IMR-90 (cell line): ENCODE measurements at regions of chr6 and their contacts with region 1.

Region 1: DNA sequence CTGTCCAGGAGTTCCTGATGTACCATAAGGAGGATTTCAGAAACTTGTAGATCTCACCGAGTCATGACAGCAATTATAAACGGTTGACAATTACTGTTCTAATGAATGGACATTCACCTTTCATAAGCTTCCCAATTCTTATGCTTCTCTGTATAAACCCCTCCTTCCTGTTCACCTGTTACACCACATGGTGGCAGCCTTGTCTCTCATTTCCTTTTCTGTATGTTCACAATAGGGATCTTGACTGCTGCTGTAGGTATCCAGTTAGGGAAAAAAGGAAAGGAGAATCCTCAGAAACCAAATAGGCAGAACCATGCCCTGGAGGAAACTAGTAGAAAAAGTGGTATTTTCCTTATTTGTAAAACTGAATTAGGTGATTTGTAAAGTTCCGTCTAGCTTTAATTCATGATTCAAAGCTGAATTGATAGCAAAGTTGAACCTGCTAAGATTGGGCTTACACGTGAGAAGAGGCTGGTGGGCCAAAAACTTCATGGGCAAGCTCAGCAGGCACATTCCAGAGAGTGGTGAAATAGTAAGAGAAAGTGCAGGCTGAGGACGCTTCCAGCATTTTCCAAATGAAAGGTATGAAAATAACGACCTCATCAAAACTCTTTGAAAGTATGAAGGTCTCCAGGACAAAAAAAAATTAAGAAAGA is 29.0 kb upstream of the TBPL1 start:
- DNase-seq: peak; percentile 84
- ATAC-seq: peak; percentile 96
- H3K4me3 ChIP-seq: no peak overlapping the region
- H3K27ac ChIP-seq: no peak overlapping the region
- H3K4me1 ChIP-seq: no peaks in the 10 kb centered on the region; the same call in 1 of the 2 replicates
- H3K27me3 ChIP-seq: no peaks in the 10 kb centered on the region; the same call in 1 of the 2 replicates
- CTCF ChIP-seq: peak; percentile 93
- POLR2A ChIP-seq: peak; percentile 49; the same call in 1 of the 2 replicates
- RAD21 ChIP-seq: peak; percentile 98

Region 2: DNA sequence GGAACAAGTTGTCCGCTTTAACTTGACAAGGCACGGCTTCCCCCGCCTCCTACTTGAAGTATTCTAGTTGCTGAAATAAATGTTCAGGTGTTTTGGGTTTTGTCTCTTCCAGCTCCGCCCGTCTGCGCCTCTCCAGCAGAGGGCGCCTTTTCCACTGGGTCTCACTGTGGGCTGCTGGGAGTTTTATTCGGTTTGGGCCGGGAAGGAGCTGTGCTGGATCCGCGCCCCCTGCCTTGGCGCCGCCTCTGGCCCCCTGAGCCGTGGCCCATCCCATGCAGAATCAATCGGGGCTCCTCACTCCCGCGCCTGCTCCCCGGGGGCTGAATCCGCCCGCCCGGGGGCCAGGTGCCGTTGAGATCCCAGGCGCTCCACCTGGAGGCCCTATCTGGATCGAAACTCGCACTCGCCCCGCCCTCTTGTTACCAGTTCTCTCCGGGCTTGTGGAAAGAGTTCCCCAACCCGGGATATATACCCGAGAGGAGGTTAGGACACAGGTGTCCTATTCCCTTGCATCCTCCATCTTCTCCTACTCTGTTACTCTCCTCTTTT is 86.2 kb before region 1 on chr6:
- CTCF ChIA-PET with region 1: no interaction called
- POLR2A ChIA-PET with region 1: no interaction called
- dilution Hi-C with region 1: no loop called
- in situ Hi-C with region 1: no loop called
- intact Hi-C with region 1: no loop called
- DNase-seq: no peak
- ATAC-seq: no peak
- H3K4me3 ChIP-seq: no peak overlapping the region
- H3K27ac ChIP-seq: no peak overlapping the region
- H3K4me1 ChIP-seq: peaks cover 8% of the 10 kb centered on the region
- H3K27me3 ChIP-seq: no peaks in the 10 kb centered on the region
- CTCF ChIP-seq: peak; percentile 30; the same call in 1 of the 2 replicates
- POLR2A ChIP-seq: no peak
- RAD21 ChIP-seq: peak; percentile 30

Region 3: GRCh38 chr6:133891149-133891926 is 32.7 kb before region 1 on chr6:
- CTCF ChIA-PET with region 1: no interaction called
- POLR2A ChIA-PET with region 1: no interaction called
- dilution Hi-C with region 1: no loop called
- in situ Hi-C with region 1: no loop called
- intact Hi-C with region 1: no loop called
- DNase-seq: peak; percentile 39
- ATAC-seq: no peak
- H3K4me3 ChIP-seq: peak overlapping the region; percentile 99
- H3K27ac ChIP-seq: peak overlapping the region; percentile 97
- H3K4me1 ChIP-seq: peaks cover 13% of the 10 kb centered on the region
- H3K27me3 ChIP-seq: no peaks in the 10 kb centered on the region
- CTCF ChIP-seq: no peak
- POLR2A ChIP-seq: no peak
- RAD21 ChIP-seq: no peak

Region 4: GRCh38 chr6:133973109-133973971 is 49.3 kb after region 1 on chr6:
- CTCF ChIA-PET with region 1: interaction called, 3 read pairs
- POLR2A ChIA-PET with region 1: no interaction called
- dilution Hi-C with region 1: no loop called
- in situ Hi-C with region 1: no loop called
- intact Hi-C with region 1: loop called (anchors 1 kb)
- DNase-seq: peak; percentile 72
- ATAC-seq: peak; percentile 74
- H3K4me3 ChIP-seq: no peak overlapping the region
- H3K27ac ChIP-seq: no peak overlapping the region
- H3K4me1 ChIP-seq: peaks cover 2% of the 10 kb centered on the region; the same call in 1 of the 2 replicates
- H3K27me3 ChIP-seq: no peaks in the 10 kb centered on the region
- CTCF ChIP-seq: peak; percentile 80
- POLR2A ChIP-seq: no peak
- RAD21 ChIP-seq: peak; percentile 78

Region 5: DNA sequence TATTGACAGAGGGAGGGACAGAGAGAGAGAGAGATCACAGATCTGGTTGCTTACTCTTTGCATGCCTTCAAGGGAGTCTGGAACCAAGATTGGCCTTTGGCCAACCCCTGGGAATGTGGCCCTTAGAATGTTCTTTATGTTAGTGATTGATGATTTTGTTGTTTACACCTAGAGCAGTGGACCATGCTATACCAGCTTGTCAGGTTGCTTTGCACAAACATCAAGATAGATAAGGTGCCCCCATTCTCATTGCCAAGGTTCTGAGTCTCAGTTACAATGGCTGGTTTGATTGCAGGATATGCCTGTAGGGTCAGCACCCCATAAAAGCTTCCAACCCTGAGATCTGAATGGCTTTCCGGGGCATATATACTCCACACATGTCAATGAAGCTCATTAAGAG is 181.9 kb after region 1 on chr6:
- CTCF ChIA-PET with region 1: interaction called, 22 read pairs
- POLR2A ChIA-PET with region 1: no interaction called
- dilution Hi-C with region 1: no loop called
- in situ Hi-C with region 1: no loop called
- intact Hi-C with region 1: no loop called
- DNase-seq: no peak
- ATAC-seq: no peak
- H3K4me3 ChIP-seq: no peak overlapping the region
- H3K27ac ChIP-seq: no peak overlapping the region
- H3K4me1 ChIP-seq: peaks cover 7% of the 10 kb centered on the region
- H3K27me3 ChIP-seq: no peaks in the 10 kb centered on the region
- CTCF ChIP-seq: no peak
- POLR2A ChIP-seq: no peak
- RAD21 ChIP-seq: no peak